GM12878 (cell line): ENCODE measurements at regions of chr5 and their contacts with region 1.

Region 1: DNA sequence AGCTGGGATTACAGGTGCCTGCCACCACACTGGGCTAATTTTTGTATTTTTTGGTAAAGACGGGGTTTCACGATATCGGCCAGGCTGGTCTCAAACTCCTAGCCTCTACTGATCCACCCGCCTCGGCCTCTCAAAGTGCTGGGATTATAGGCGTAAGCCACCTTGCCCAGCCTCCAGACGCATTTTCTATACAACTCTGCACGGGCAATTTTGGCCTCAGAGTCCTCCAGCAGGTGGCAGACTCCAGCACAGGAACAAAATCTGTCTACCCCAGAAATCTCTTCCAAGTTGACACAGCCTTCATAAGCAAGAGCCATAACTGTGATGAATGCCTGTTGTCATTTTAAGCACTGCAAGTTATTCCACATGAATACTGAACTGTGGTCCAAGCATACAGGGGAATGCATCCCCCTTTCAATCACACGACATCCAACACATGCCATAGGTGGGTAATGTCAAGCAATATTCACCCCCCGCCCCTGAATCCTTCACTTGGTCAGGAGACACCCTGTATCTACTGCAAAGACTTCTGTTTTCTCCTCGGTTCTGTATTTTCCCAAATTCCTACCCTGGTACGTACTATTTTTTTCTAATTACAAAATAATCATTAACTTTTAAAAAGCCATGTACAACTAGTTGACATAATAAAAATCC is 50.8 kb downstream of the ALDH7A1 start:
- DNase-seq: no peak
- ATAC-seq: peak; percentile 90
- H3K4me3 ChIP-seq: no peak overlapping the region
- H3K27ac ChIP-seq: no peak overlapping the region
- H3K4me1 ChIP-seq: no peaks in the 10 kb centered on the region
- H3K27me3 ChIP-seq: no peaks in the 10 kb centered on the region
- CTCF ChIP-seq: peak; percentile 60 to 76 (median 75)
- EP300 ChIP-seq: no peak
- POLR2A ChIP-seq: no peak
- RAD21 ChIP-seq: peak; percentile 64

Region 2: GRCh38 chr5:126339215-126339805 is 204.9 kb before region 1 on chr5:
- CTCF ChIA-PET with region 1: interaction called, 91 read pairs
- POLR2A ChIA-PET with region 1: interaction called, 9 read pairs
- RAD21 ChIA-PET with region 1: interaction called, 36 read pairs
- SMC1A ChIA-PET with region 1: interaction called, 41 read pairs
- in situ Hi-C with region 1: no loop called
- intact Hi-C with region 1: loop called (anchors 1 kb)
- DNase-seq: no peak
- ATAC-seq: peak; percentile 62
- H3K4me3 ChIP-seq: no peak overlapping the region
- H3K27ac ChIP-seq: no peak overlapping the region
- H3K4me1 ChIP-seq: no peaks in the 10 kb centered on the region
- H3K27me3 ChIP-seq: no peaks in the 10 kb centered on the region
- CTCF ChIP-seq: peak; percentile 60 to 80 (median 74); a peak in 5 of 6 replicates
- EP300 ChIP-seq: no peak
- POLR2A ChIP-seq: no peak
- RAD21 ChIP-seq: peak; percentile 89

Region 3: GRCh38 chr5:126531543-126532120 is 12.6 kb before region 1 on chr5:
- CTCF ChIA-PET with region 1: interaction called, 21 read pairs
- POLR2A ChIA-PET with region 1: no interaction called
- RAD21 ChIA-PET with region 1: interaction called, 3 read pairs
- SMC1A ChIA-PET with region 1: interaction called, 6 read pairs
- in situ Hi-C with region 1: no loop called
- intact Hi-C with region 1: no loop called
- DNase-seq: no peak
- ATAC-seq: no peak
- H3K4me3 ChIP-seq: no peak overlapping the region
- H3K27ac ChIP-seq: no peak overlapping the region
- H3K4me1 ChIP-seq: no peaks in the 10 kb centered on the region
- H3K27me3 ChIP-seq: no peaks in the 10 kb centered on the region
- CTCF ChIP-seq: no peak
- EP300 ChIP-seq: no peak
- POLR2A ChIP-seq: no peak
- RAD21 ChIP-seq: no peak

Region 4: DNA sequence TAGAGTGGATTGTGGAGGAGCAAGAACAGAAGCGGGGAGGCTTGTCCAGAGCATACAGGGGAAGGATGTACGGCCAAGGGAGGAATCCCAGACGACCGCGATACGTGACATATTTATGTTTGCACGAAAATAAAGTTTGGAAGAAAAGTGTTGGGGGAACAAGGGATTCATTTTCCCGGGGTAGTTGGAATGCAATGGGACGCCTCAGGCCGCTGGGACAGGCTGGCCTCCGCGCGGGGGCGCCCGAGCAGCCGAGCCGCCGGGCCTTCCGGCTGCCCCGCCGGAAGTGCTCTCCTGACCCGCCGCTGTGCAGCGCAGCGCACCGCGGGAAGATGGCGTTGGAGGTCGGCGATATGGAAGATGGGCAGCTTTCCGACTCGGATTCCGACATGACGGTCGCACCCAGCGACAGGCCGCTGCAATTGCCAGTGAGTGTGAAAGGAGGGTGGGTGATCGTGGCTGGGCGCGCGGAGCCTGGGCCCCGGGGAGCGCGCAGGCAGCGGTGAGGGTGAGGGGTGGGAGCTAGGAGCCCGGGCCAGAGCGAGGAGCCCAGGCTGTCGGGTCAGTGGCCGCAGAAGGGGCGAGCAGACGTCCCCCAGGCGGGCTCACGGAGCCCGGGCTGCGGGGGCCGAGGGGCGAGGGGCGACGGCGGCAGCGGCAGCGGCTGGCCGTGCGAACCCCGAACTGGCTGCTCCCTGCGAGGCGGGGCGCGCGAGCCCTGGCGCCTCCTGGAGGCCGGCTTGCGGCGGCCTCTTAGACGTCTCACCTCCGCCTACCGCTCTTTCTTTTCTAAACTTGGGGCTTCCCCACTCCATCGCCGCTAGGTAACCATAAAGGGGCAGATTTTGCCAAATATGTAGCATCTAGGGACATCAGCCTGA is 56.7 kb after region 1 on chr5 and contains the start of gene PHAX:
- CTCF ChIA-PET with region 1: interaction called, 13 read pairs
- POLR2A ChIA-PET with region 1: no interaction called
- RAD21 ChIA-PET with region 1: no interaction called
- SMC1A ChIA-PET with region 1: no interaction called
- in situ Hi-C with region 1: no loop called
- intact Hi-C with region 1: loop called (anchors 2 kb)
- DNase-seq: peak; percentile 32
- ATAC-seq: peak; percentile 95
- H3K4me3 ChIP-seq: peak within 1 kb of the TSS; percentile 92
- H3K27ac ChIP-seq: peak within 1 kb of the TSS; percentile 69
- H3K4me1 ChIP-seq: no peaks in the 10 kb centered on the region; the same call in 1 of the 2 replicates
- H3K27me3 ChIP-seq: no peaks in the 10 kb centered on the region
- CTCF ChIP-seq: peak; percentile 72 to 89 (median 85)
- EP300 ChIP-seq: no peak
- POLR2A ChIP-seq: peak; percentile 94
- RAD21 ChIP-seq: 0 out of 2 replicates have a peak, but pooled peaks have one; percentile 10
- polyA plus RNA-seq, gene PHAX: 60.8 to 71.5 TPM

Region 5: DNA sequence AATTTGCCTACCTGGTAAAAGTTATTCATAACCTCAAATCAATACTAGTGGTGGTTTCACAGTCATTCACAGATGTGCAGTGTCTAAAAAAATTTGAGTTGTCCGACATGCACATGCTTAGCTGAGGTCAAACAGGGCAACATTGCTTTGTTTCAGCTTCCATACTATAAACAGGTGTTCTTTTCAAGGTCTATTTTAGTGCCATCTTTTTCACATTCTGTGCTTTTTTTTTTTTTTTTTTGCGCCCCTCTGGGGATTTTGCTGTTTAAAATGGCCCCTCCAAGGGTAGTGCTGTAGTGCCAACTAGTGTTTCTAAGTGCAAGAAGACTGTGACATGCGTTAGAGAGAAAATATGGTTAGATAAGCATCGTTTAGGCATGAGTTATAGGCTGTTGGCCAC is 71.1 kb after region 1 on chr5:
- CTCF ChIA-PET with region 1: interaction called, 5 read pairs
- POLR2A ChIA-PET with region 1: interaction called, 3 read pairs
- RAD21 ChIA-PET with region 1: no interaction called
- SMC1A ChIA-PET with region 1: no interaction called
- in situ Hi-C with region 1: no loop called
- intact Hi-C with region 1: loop called (anchors 5 kb)
- DNase-seq: peak; percentile 63
- ATAC-seq: peak; percentile 82
- H3K4me3 ChIP-seq: no peak overlapping the region
- H3K27ac ChIP-seq: peak overlapping the region; percentile 44; the same call in 1 of the 2 replicates
- H3K4me1 ChIP-seq: peaks cover 12% of the 10 kb centered on the region
- H3K27me3 ChIP-seq: no peaks in the 10 kb centered on the region
- CTCF ChIP-seq: peak; percentile 25 to 50 (median 42); a peak in 5 of 6 replicates
- EP300 ChIP-seq: peak in 1 of 2 experiments; percentile 16; a peak in 1 of 4 replicates
- POLR2A ChIP-seq: no peak
- RAD21 ChIP-seq: peak; percentile 58

Region 6: GRCh38 chr5:126633552-126633951 is 89.3 kb after region 1 on chr5:
- CTCF ChIA-PET with region 1: no interaction called
- POLR2A ChIA-PET with region 1: no interaction called
- RAD21 ChIA-PET with region 1: no interaction called
- SMC1A ChIA-PET with region 1: no interaction called
- in situ Hi-C with region 1: no loop called
- intact Hi-C with region 1: no loop called
- DNase-seq: no peak
- ATAC-seq: no peak
- H3K4me3 ChIP-seq: no peak overlapping the region
- H3K27ac ChIP-seq: no peak overlapping the region
- H3K4me1 ChIP-seq: no peaks in the 10 kb centered on the region
- H3K27me3 ChIP-seq: no peaks in the 10 kb centered on the region
- CTCF ChIP-seq: no peak
- EP300 ChIP-seq: no peak
- POLR2A ChIP-seq: no peak
- RAD21 ChIP-seq: no peak

Region 7: GRCh38 chr5:127053049-127053448 is 508.8 kb after region 1 on chr5:
- CTCF ChIA-PET with region 1: no interaction called
- POLR2A ChIA-PET with region 1: no interaction called
- RAD21 ChIA-PET with region 1: no interaction called
- SMC1A ChIA-PET with region 1: no interaction called
- in situ Hi-C with region 1: no loop called
- intact Hi-C with region 1: no loop called
- DNase-seq: no peak
- ATAC-seq: no peak
- H3K4me3 ChIP-seq: no peak overlapping the region
- H3K27ac ChIP-seq: no peak overlapping the region
- H3K4me1 ChIP-seq: no peaks in the 10 kb centered on the region
- H3K27me3 ChIP-seq: no peaks in the 10 kb centered on the region
- CTCF ChIP-seq: no peak
- EP300 ChIP-seq: no peak
- POLR2A ChIP-seq: no peak
- RAD21 ChIP-seq: no peak

Region 8: GRCh38 chr5:127492854-127493738 is 948.9 kb after region 1 on chr5:
- CTCF ChIA-PET with region 1: interaction called, 3 read pairs
- POLR2A ChIA-PET with region 1: no interaction called
- RAD21 ChIA-PET with region 1: no interaction called
- SMC1A ChIA-PET with region 1: interaction called, 3 read pairs
- in situ Hi-C with region 1: no loop called
- intact Hi-C with region 1: loop called (anchors 5 kb)
- DNase-seq: peak; percentile 26
- ATAC-seq: peak; percentile 75
- H3K4me3 ChIP-seq: no peak overlapping the region
- H3K27ac ChIP-seq: no peak overlapping the region
- H3K4me1 ChIP-seq: no peaks in the 10 kb centered on the region
- H3K27me3 ChIP-seq: no peaks in the 10 kb centered on the region
- CTCF ChIP-seq: peak; percentile 57 to 66 (median 64)
- EP300 ChIP-seq: no peak
- POLR2A ChIP-seq: no peak
- RAD21 ChIP-seq: peak; percentile 22; the same call in 1 of the 2 replicates

Region 9: GRCh38 chr5:127959152-127959764 is 1415.0 kb after region 1 on chr5:
- CTCF ChIA-PET with region 1: no interaction called
- POLR2A ChIA-PET with region 1: no interaction called
- RAD21 ChIA-PET with region 1: no interaction called
- SMC1A ChIA-PET with region 1: no interaction called
- in situ Hi-C with region 1: no loop called
- intact Hi-C with region 1: no loop called
- DNase-seq: no peak
- ATAC-seq: no peak
- H3K4me3 ChIP-seq: no peak overlapping the region
- H3K27ac ChIP-seq: no peak overlapping the region
- H3K4me1 ChIP-seq: no peaks in the 10 kb centered on the region
- H3K27me3 ChIP-seq: no peaks in the 10 kb centered on the region
- CTCF ChIP-seq: no peak
- EP300 ChIP-seq: no peak
- POLR2A ChIP-seq: no peak
- RAD21 ChIP-seq: no peak